Sciatic nerve (tissue), 2 donors: ENCODE measurements at regions of chr2 and their contacts with region 1.

Region 1: GRCh38 chr2:226791487-226792081 is 8.0 kb downstream of the IRS1 start:
- DNase-seq: peak; percentile 94
- ATAC-seq: peak; percentile 93

Region 2: GRCh38 chr2:226220511-226220910 is 571.1 kb before region 1 on chr2:
- intact Hi-C with region 1: loop called (anchors 10 kb)
- DNase-seq: no peak
- ATAC-seq: no peak

Region 3: GRCh38 chr2:228590681-228591080 is 1799.1 kb after region 1 on chr2:
- intact Hi-C with region 1: no loop called
- DNase-seq: no peak
- ATAC-seq: no peak